ENCODE measurements at regions of chr13 and their contacts with region 1.

Region 1: DNA sequence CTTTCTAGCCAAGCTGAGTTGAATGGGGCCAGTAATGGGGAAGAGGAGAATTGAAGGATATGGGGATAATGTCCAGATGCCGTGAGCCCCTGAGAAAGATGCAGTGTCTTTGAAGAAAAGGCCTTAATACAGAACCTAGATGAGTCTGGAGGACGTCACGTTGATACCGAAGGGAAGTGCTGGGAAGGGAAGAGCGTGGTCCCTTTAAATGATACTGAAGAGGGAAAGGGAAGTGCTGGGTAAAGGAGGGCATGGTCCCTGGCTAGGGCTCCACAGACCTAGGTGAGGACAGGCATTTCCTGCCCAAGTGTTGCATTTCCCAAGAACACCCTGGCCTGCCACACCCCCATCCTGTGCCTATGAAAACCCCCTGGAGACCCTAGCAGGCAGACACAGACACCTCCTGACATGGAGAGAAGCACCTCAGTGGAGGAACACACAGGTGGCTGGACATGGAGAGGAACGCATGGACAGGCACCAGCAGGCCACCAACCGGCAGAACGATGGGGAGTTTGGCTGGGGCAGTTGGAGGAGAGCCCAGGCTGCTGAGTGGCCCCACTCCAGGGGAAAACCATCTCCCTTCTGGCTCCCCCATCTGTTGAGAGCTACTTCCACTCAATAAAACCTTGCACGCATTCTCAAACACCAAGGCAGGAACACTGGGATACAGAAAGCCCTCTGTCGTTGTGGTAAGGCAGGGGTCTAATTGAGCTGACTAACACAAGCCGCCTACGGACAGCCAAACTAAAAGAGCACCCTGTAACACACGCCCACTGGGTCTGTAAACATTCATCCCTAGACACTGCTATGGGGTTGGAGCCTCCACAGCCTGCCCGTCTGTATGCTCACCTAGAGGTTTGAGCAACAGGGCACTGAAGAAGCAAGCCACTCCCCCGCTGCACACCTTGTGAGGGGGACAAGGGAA is 34.9 kb upstream of the POMP start:
- DNase-seq: no peak
- ATAC-seq: no peak
- H3K4me3 ChIP-seq: no peak overlapping the region
- H3K4me1 ChIP-seq: no peaks in the 10 kb centered on the region
- CTCF ChIP-seq: no peak

Region 2: DNA sequence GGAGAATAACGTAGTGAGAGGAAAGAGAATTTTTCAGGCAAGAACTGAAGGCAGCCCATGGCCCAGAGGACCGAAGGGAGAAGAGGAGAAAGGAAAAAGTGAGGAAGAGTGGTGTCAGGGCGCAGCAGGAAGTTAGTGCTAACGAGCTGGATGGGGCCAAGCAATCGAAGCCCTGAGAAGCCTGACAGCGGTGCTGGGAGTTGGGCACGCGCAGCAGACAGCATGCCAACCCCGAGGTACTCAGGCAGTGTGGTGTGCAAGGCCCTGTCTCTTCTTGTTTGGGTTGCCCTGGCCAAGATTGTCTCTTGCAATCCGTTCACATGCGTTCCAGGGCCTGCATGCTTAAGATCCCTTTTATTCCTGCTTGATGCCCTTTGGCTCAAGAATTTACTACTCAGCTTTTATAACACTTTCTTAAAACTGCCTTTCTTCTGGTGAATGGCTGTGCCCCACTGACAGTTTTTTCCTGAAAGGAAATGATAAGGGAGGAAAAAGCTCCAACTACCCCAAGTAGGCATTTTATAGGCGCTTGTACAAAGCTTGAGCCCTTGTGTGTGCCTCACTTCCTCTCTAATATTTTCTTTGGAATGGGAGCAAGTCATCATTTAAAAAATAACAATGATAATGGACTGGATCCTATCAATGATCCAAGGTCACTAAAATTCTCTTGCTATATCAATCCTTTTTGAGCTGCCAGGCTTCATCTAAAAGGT is 244.5 kb before region 1 on chr13:
- intact Hi-C with region 1: loop called in 1 of 2 experiments (anchors 5 kb)
- DNase-seq: no peak
- ATAC-seq: no peak
- H3K4me3 ChIP-seq: no peak overlapping the region
- H3K4me1 ChIP-seq: no peaks in the 10 kb centered on the region
- CTCF ChIP-seq: no peak

Region 3: GRCh38 chr13:28872427-28873176 is 248.6 kb after region 1 on chr13:
- intact Hi-C with region 1: no loop called
- DNase-seq: no peak
- ATAC-seq: no peak
- H3K4me3 ChIP-seq: no peak overlapping the region
- H3K4me1 ChIP-seq: no peaks in the 10 kb centered on the region
- CTCF ChIP-seq: no peak